HepG2 (cell line): ENCODE measurements at regions of chr5 and their contacts with region 1.

Region 1: GRCh38 chr5:149114403-149115312 is 26.6 kb upstream of the ABLIM3 start:
- DNase-seq: peak; percentile 66
- ATAC-seq: peak; percentile 98
- H3K4me3 ChIP-seq: no peak overlapping the region
- H3K27ac ChIP-seq: no peak overlapping the region
- H3K4me1 ChIP-seq: no peaks in the 10 kb centered on the region
- H3K27me3 ChIP-seq: no peaks in the 10 kb centered on the region; a peak in 1 of 5 replicates
- CTCF ChIP-seq: peak; percentile 88
- EP300 ChIP-seq: no peak
- POLR2A ChIP-seq: no peak
- RAD21 ChIP-seq: peak; percentile 60; the same call in 1 of the 2 replicates

Region 2: DNA sequence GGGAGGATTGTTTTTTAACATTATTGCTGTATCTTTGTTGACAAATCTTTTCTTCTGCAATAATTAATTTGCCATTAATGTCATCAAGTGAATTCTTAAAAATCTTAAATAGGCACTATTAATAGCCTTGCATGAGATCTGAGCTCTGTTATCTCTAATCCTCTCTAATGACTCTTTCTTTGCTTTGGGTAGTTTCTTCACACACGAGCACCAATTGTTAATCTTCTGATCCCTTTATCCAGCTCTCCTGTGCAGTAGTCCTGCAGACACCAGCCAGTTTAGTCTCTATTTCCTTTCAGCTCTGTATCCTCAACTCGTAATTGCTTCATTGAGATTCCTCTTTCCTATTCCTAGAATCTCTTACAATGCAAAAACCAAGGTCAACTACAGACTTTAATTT is 938.2 kb before region 1 on chr5:
- CTCF ChIA-PET with region 1: no interaction called
- POLR2A ChIA-PET with region 1: no interaction called
- in situ Hi-C with region 1: no loop called
- intact Hi-C with region 1: no loop called
- DNase-seq: no peak
- ATAC-seq: no peak
- H3K4me3 ChIP-seq: no peak overlapping the region
- H3K27ac ChIP-seq: no peak overlapping the region
- H3K4me1 ChIP-seq: no peaks in the 10 kb centered on the region
- H3K27me3 ChIP-seq: no peaks in the 10 kb centered on the region
- CTCF ChIP-seq: no peak
- EP300 ChIP-seq: no peak
- POLR2A ChIP-seq: no peak
- RAD21 ChIP-seq: no peak

Region 3: DNA sequence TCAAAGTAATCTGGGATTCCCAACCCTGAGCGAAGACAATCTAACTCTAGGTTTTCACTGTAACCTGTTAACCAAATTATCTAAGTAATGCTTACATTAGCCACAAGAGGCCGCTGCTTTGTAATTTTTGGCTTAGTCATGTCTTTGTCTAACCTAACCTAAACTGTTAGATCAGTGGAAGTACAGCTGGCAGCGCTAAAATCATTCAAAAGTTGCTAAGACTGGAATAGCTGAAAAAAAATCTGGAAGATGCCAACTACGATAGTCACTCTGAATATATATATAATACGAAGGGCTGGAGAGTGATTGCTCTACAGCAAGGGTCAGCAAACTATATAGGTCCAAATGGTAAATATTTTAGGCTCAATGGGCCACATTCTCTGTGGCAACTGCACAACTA is 670.7 kb before region 1 on chr5:
- CTCF ChIA-PET with region 1: interaction called, 3 read pairs
- POLR2A ChIA-PET with region 1: no interaction called
- in situ Hi-C with region 1: no loop called
- intact Hi-C with region 1: loop called (anchors 10 kb)
- DNase-seq: peak; percentile 65
- ATAC-seq: peak; percentile 91
- H3K4me3 ChIP-seq: no peak overlapping the region
- H3K27ac ChIP-seq: no peak overlapping the region
- H3K4me1 ChIP-seq: no peaks in the 10 kb centered on the region
- H3K27me3 ChIP-seq: no peaks in the 10 kb centered on the region
- CTCF ChIP-seq: peak; percentile 72
- EP300 ChIP-seq: no peak
- POLR2A ChIP-seq: no peak
- RAD21 ChIP-seq: no peak

Region 4: DNA sequence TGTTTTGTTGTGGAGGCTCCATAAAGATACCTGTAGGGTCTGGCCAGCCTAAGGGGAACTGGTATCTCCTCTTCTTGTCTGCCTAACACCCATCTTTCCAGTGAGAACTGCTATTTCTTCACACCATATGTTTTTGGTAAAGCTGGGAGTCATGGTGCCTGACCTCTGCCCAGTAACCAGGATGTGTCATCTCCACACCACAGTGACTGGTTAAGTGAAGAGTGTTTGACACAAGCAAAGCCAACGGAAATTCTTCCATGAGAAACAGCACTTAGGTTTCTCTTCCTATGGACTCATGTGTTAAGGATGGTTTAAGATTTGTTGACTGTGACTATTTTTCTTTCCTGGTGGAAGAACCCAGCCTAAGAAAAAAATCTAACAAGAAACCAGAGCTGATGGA is 571.8 kb before region 1 on chr5:
- CTCF ChIA-PET with region 1: no interaction called
- POLR2A ChIA-PET with region 1: no interaction called
- in situ Hi-C with region 1: no loop called
- intact Hi-C with region 1: no loop called
- DNase-seq: no peak
- ATAC-seq: no peak
- H3K4me3 ChIP-seq: no peak overlapping the region
- H3K27ac ChIP-seq: no peak overlapping the region
- H3K4me1 ChIP-seq: no peaks in the 10 kb centered on the region
- H3K27me3 ChIP-seq: no peaks in the 10 kb centered on the region
- CTCF ChIP-seq: no peak
- EP300 ChIP-seq: no peak
- POLR2A ChIP-seq: no peak
- RAD21 ChIP-seq: no peak

Region 5: GRCh38 chr5:148740966-148741742 is 373.5 kb before region 1 on chr5:
- CTCF ChIA-PET with region 1: interaction called, 8 read pairs
- POLR2A ChIA-PET with region 1: no interaction called
- in situ Hi-C with region 1: loop called (anchors 5 kb)
- intact Hi-C with region 1: loop called (anchors 1 kb)
- DNase-seq: peak; percentile 42
- ATAC-seq: peak; percentile 48
- H3K4me3 ChIP-seq: no peak overlapping the region; a peak in 1 of 6 replicates
- H3K27ac ChIP-seq: no peak overlapping the region
- H3K4me1 ChIP-seq: peaks cover 22% of the 10 kb centered on the region
- H3K27me3 ChIP-seq: no peaks in the 10 kb centered on the region
- CTCF ChIP-seq: peak; percentile 51
- EP300 ChIP-seq: no peak
- POLR2A ChIP-seq: no peak
- RAD21 ChIP-seq: no peak

Region 6: DNA sequence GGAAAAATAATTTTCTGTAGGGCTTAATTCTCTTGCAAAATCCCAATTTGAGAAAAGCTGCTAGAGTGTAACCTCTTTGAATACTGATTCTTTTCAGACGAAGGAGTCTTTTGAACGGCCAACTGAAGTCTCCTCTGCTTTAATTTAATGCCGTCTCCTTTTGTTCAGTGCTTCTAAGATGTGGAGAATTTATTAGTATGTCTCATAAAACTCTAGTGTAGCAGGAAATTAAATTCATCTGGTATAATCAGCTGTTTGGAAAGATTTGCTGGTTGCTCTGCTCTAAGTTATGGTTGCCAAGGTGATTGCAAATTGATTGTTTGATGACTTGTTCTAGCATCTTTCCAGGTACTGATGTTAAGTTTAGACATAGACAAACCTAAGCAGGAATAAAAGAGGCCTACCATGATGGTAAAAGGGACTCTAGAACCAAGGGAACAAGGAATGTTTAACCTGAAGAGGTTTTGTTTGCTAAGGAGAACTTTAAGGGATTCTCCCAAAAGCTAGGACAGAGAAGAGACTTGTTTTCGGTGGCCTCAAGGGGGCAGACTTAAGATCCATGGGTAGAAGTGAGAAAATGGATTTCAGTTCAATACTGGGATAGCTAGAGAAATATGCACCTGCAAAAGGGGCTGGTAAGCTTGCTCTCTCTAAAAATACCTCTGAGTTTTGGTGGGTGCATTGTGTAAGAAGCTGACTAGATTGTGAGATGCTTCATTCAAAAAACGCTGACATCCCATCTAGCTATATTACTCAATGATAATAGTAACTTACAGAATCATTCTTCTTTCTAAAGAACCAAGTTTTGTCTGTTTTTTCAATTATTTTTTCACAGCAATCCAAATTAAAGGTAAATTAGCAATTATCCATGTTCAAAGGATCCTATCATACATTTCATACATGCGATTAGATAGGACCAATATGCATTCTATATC is 293.9 kb before region 1 on chr5:
- CTCF ChIA-PET with region 1: interaction called, 4 read pairs
- POLR2A ChIA-PET with region 1: no interaction called
- in situ Hi-C with region 1: no loop called
- intact Hi-C with region 1: loop called (anchors 5 kb)
- DNase-seq: peak; percentile 13
- ATAC-seq: peak; percentile 59; the same call in 1 of the 3 replicates
- H3K4me3 ChIP-seq: no peak overlapping the region
- H3K27ac ChIP-seq: no peak overlapping the region
- H3K4me1 ChIP-seq: peaks cover 4% of the 10 kb centered on the region
- H3K27me3 ChIP-seq: peaks cover 0 to 3% of the 10 kb centered on the region in 2 experiments; a peak in 3 of 5 replicates
- CTCF ChIP-seq: peak; percentile 57
- EP300 ChIP-seq: no peak
- POLR2A ChIP-seq: no peak
- RAD21 ChIP-seq: no peak

Region 7: DNA sequence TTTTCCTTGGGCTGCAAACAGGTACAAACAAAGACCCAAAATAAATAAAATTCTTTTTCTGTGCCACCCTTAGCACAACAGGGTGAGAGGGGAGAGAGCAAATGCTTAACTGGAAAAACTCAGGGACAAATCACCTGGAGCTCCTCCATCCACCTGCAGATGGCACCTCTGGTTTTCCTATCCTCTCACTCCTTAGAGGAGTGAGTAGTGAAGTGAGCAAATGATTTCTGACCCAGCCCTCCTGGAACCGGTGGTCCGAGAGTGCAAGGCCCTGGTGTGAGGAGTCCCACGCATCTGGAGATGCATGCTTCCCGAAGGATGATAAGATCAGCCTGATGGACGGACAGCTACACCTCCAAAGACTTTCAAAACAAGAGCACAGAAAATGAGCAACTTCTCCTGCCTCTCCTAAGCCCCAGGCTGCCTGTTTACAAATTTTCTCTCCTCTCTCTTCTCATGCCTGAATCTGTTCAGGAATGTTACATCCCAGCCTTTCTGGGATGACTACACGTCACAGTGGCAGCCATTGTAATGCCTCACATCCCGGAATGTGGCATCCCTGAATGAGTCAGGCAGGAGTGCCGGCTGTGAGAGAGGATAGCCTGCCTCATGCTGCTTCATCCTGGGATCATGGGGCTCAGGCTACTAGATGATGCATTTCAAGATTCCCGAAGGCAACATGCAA is 201.8 kb before region 1 on chr5:
- CTCF ChIA-PET with region 1: no interaction called
- POLR2A ChIA-PET with region 1: no interaction called
- in situ Hi-C with region 1: no loop called
- intact Hi-C with region 1: loop called (anchors 1 kb)
- DNase-seq: peak; percentile 16
- ATAC-seq: peak; percentile 79
- H3K4me3 ChIP-seq: no peak overlapping the region
- H3K27ac ChIP-seq: no peak overlapping the region
- H3K4me1 ChIP-seq: no peaks in the 10 kb centered on the region
- H3K27me3 ChIP-seq: no peaks in the 10 kb centered on the region
- CTCF ChIP-seq: peak; percentile 49
- EP300 ChIP-seq: no peak
- POLR2A ChIP-seq: no peak
- RAD21 ChIP-seq: no peak

Region 8: GRCh38 chr5:148957591-148958202 is 157.0 kb before region 1 on chr5:
- CTCF ChIA-PET with region 1: no interaction called
- POLR2A ChIA-PET with region 1: no interaction called
- in situ Hi-C with region 1: no loop called
- intact Hi-C with region 1: loop called (anchors 5 kb)
- DNase-seq: peak; percentile 14
- ATAC-seq: peak; percentile 82
- H3K4me3 ChIP-seq: no peak overlapping the region
- H3K27ac ChIP-seq: no peak overlapping the region
- H3K4me1 ChIP-seq: no peaks in the 10 kb centered on the region
- H3K27me3 ChIP-seq: 0 out of 5 replicates have a peak, but pooled peaks cover 0 to 5% of the 10 kb centered on the region in 2 experiments
- CTCF ChIP-seq: peak; percentile 72
- EP300 ChIP-seq: no peak
- POLR2A ChIP-seq: no peak
- RAD21 ChIP-seq: no peak

Region 9: GRCh38 chr5:149018909-149019443 is 95.7 kb before region 1 on chr5:
- CTCF ChIA-PET with region 1: no interaction called
- POLR2A ChIA-PET with region 1: no interaction called
- in situ Hi-C with region 1: no loop called
- intact Hi-C with region 1: no loop called
- DNase-seq: no peak
- ATAC-seq: no peak
- H3K4me3 ChIP-seq: no peak overlapping the region
- H3K27ac ChIP-seq: no peak overlapping the region
- H3K4me1 ChIP-seq: no peaks in the 10 kb centered on the region
- H3K27me3 ChIP-seq: no peaks in the 10 kb centered on the region
- CTCF ChIP-seq: no peak
- EP300 ChIP-seq: no peak
- POLR2A ChIP-seq: no peak
- RAD21 ChIP-seq: no peak

Region 10: GRCh38 chr5:149063017-149063687 is 51.5 kb before region 1 on chr5 and contains the start of gene SH3TC2:
- CTCF ChIA-PET with region 1: no interaction called
- POLR2A ChIA-PET with region 1: no interaction called
- in situ Hi-C with region 1: no loop called
- intact Hi-C with region 1: loop called (anchors 10 kb)
- DNase-seq: peak; percentile 90
- ATAC-seq: peak; percentile 99
- H3K4me3 ChIP-seq: peak within 1 kb of the TSS in 1 of 3 experiments; percentile 15; a peak in 1 of 6 replicates
- H3K27ac ChIP-seq: no peak within 1 kb of the TSS
- H3K4me1 ChIP-seq: peaks cover 40% of the 10 kb centered on the region
- H3K27me3 ChIP-seq: no peaks in the 10 kb centered on the region
- CTCF ChIP-seq: no peak
- EP300 ChIP-seq: no peak
- POLR2A ChIP-seq: no peak
- RAD21 ChIP-seq: no peak
- total RNA-seq, gene SH3TC2: 0.71 and 0.94 TPM in 2 replicates